ENCODE measurements at regions of chr10 and their contacts with region 1.

Region 1: GRCh38 chr10:110530131-110530831 is 32.6 kb downstream of the DUSP5 start:
- DNase-seq: peak; percentile 38
- ATAC-seq: no peak
- H3K4me3 Mint-ChIP-seq: no peak overlapping the region
- H3K27ac Mint-ChIP-seq: no peak overlapping the region
- H3K4me1 Mint-ChIP-seq: peaks cover 60% of the 10 kb centered on the region
- H3K27me3 Mint-ChIP-seq: peaks cover 3% of the 10 kb centered on the region

Region 2: DNA sequence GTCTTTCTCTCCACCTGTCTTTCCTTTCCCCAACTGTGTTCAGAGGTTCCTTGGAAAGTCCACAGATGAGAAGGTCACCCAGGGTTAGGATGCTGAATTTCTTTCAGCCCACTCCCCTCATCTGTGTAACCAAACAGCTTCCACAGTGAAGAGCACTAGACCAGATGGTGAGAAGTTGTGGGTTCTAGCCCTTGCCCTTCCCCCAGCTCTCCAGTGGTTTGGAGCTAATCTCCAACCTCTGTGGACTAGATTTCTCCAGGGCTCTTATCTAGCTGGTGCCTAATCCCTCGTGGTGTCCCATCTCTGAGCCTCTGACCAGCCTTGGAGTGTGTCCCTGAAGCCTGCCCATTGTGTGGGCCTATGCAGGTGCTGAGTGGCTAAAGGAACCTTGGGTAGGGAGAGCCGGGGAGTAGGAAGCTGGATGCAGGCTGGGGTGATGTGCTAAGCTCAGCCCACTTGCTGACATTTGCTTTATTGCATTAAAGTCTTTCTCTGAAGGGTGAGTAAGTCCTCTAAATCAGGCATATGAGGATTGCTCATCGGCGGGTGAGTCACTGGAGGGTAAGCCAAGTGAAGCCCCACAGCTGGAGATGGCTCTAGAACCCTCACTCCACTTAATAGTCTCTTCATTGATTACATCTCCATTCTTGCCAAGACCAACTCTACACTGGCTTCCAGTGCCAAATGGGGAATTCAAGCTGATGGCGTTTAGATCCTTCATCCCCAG is 17.7 kb before region 1 on chr10:
- CTCF ChIA-PET with region 1: interaction called, 3 read pairs
- POLR2A ChIA-PET with region 1: interaction called, 4 read pairs
- intact Hi-C with region 1: loop called (anchors 1 kb)
- DNase-seq: peak; percentile 80
- ATAC-seq: peak; percentile 97
- H3K4me3 Mint-ChIP-seq: no peak overlapping the region
- H3K27ac Mint-ChIP-seq: peak overlapping the region; percentile 81
- H3K4me1 Mint-ChIP-seq: peaks cover 51% of the 10 kb centered on the region
- H3K27me3 Mint-ChIP-seq: no peaks in the 10 kb centered on the region

Measured in activated CD4-positive, alpha-beta T cell treated with anti-CD3 and anti-CD28 coated beads for 36 hours (primary cell).